ENCODE measurements at regions of chr16 and their contacts with region 1.

Region 1: GRCh38 chr16:84726079-84726668 is 26.4 kb downstream of the USP10 start:
- DNase-seq: peak; percentile 86
- H3K4me3 Mint-ChIP-seq: no peak overlapping the region
- H3K27ac Mint-ChIP-seq: no peak overlapping the region
- H3K4me1 Mint-ChIP-seq: peaks cover 64% of the 10 kb centered on the region
- H3K27me3 Mint-ChIP-seq: no peaks in the 10 kb centered on the region

Region 2: GRCh38 chr16:84511180-84511824 is 214.9 kb before region 1 on chr16:
- CTCF ChIA-PET with region 1: interaction called, 27 read pairs
- POLR2A ChIA-PET with region 1: no interaction called
- intact Hi-C with region 1: loop called (anchors 5 kb)
- DNase-seq: peak; percentile 82
- H3K4me3 Mint-ChIP-seq: no peak overlapping the region
- H3K27ac Mint-ChIP-seq: peak overlapping the region; percentile 44
- H3K4me1 Mint-ChIP-seq: peaks cover 67% of the 10 kb centered on the region
- H3K27me3 Mint-ChIP-seq: no peaks in the 10 kb centered on the region

Region 3: GRCh38 chr16:84663433-84664101 is 62.6 kb before region 1 on chr16:
- CTCF ChIA-PET with region 1: interaction called, 26 read pairs
- POLR2A ChIA-PET with region 1: no interaction called
- intact Hi-C with region 1: no loop called
- DNase-seq: no peak
- H3K4me3 Mint-ChIP-seq: no peak overlapping the region
- H3K27ac Mint-ChIP-seq: no peak overlapping the region
- H3K4me1 Mint-ChIP-seq: peaks cover 1% of the 10 kb centered on the region
- H3K27me3 Mint-ChIP-seq: no peaks in the 10 kb centered on the region

Region 4: GRCh38 chr16:84699712-84700445 is 26.3 kb before region 1 on chr16 and contains the start of gene USP10:
- CTCF ChIA-PET with region 1: interaction called, 12 read pairs
- POLR2A ChIA-PET with region 1: interaction called, 4 read pairs
- intact Hi-C with region 1: loop called (anchors 2 kb)
- DNase-seq: peak; percentile 88
- H3K4me3 Mint-ChIP-seq: peak within 1 kb of the TSS; percentile 97
- H3K27ac Mint-ChIP-seq: peak within 1 kb of the TSS; percentile 96
- H3K4me1 Mint-ChIP-seq: peaks cover 35% of the 10 kb centered on the region
- H3K27me3 Mint-ChIP-seq: no peaks in the 10 kb centered on the region
- total RNA-seq, gene USP10: 105 to 108 TPM

Region 5: GRCh38 chr16:84738255-84739038 is 12.3 kb after region 1 on chr16:
- CTCF ChIA-PET with region 1: interaction called, 187 read pairs
- POLR2A ChIA-PET with region 1: interaction called, 4 read pairs
- intact Hi-C with region 1: no loop called
- DNase-seq: peak; percentile 82
- H3K4me3 Mint-ChIP-seq: peak overlapping the region; percentile 6
- H3K27ac Mint-ChIP-seq: peak overlapping the region; percentile 63
- H3K4me1 Mint-ChIP-seq: peaks cover 48% of the 10 kb centered on the region
- H3K27me3 Mint-ChIP-seq: no peaks in the 10 kb centered on the region

Region 6: GRCh38 chr16:84754353-84754856 is 28.2 kb after region 1 on chr16:
- CTCF ChIA-PET with region 1: interaction called, 20 read pairs
- POLR2A ChIA-PET with region 1: no interaction called
- intact Hi-C with region 1: no loop called
- DNase-seq: peak; percentile 65
- H3K4me3 Mint-ChIP-seq: peak overlapping the region; percentile 36
- H3K27ac Mint-ChIP-seq: no peak overlapping the region
- H3K4me1 Mint-ChIP-seq: peaks cover 87% of the 10 kb centered on the region
- H3K27me3 Mint-ChIP-seq: no peaks in the 10 kb centered on the region

Region 7: DNA sequence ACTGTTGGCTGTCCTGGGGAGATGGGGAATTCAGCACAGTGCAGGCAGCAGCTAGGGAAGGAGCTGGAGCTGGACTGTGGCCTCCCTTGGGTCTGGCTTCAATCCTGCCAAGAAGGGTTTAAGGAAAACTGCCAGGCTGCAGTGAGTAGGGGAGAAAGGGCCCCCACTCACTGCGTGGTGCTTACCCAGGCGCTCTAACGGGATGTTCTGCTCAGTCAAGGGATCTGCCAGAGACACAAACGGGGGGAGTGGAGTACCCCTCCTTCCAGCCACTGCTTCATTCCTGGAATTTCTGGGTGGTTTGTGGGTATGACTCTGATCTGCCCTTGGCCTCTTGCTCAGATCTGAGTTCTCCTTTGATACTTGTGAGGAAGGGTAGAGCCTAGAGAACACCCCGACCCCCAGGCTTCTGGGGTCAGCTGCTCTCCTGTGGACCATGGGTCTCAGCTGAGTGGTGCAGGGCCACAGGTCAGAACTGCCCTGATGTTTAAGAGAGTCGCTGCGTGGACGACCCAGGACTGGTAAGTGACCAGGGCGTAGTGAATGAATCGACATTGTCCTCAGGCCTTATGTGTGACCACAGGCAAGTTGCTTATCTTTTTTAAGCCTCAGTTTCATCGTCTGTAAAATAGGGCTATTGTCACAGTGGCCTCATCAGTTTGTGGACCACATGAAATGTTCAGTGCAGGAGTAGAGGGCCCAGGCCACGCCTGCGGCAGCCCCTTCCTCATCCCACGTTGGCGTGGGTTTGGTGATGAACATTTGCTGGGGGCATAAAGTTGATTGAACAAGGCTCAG is 103.2 kb after region 1 on chr16:
- CTCF ChIA-PET with region 1: no interaction called
- POLR2A ChIA-PET with region 1: no interaction called
- intact Hi-C with region 1: no loop called
- DNase-seq: no peak
- H3K4me3 Mint-ChIP-seq: no peak overlapping the region
- H3K27ac Mint-ChIP-seq: no peak overlapping the region
- H3K4me1 Mint-ChIP-seq: no peaks in the 10 kb centered on the region
- H3K27me3 Mint-ChIP-seq: peaks cover 7% of the 10 kb centered on the region

Measured in activated CD4-positive, alpha-beta memory T cell treated with anti-CD3 and anti-CD28 coated beads for 36 hours (primary cell).